ENCODE measurements at regions of chr6 and their contacts with region 1.

Region 1: GRCh38 chr6:52522151-52522626 is 54.7 kb downstream of the TRAM2 start:
- DNase-seq: no peak
- H3K4me3 ChIP-seq: no peak overlapping the region
- H3K27ac ChIP-seq: peak overlapping the region; percentile 32 to 72 (median 62)
- H3K4me1 ChIP-seq: peaks cover 19 to 29% (median 24%) of the 10 kb centered on the region in 4 donors
- H3K27me3 ChIP-seq: no peaks in the 10 kb centered on the region
- CTCF ChIP-seq: no peak
- EP300 ChIP-seq: no peak
- POLR2A ChIP-seq: no peak

Region 2: DNA sequence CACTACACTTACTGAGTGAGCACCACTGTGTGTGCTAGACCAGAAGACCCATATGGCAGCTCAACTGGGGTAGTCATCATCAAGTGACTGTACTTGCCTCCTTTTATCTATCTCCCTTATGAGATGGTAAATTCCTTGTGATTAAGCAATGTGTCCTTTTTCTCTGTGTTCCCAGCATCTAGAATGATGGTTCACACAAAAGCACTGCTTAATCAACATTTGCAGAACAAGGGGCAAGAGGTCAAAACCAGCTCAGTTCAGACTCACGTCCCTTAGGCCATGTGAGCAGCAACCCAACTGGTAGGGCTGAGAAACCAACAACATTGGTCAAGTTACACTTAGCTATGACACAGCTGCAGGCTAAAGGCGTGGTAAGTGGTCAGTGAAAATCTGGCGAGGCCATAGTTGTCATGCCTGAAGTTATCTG is 44.7 kb after region 1 on chr6:
- in situ Hi-C with region 1: no loop called
- intact Hi-C with region 1: loop called (anchors 5 kb)
- DNase-seq: no peak
- H3K4me3 ChIP-seq: no peak overlapping the region
- H3K27ac ChIP-seq: peak overlapping the region in 2 of 4 donors; percentile 36 to 50
- H3K4me1 ChIP-seq: peaks cover 0 to 54% (median 34%) of the 10 kb centered on the region in 4 donors
- H3K27me3 ChIP-seq: no peaks in the 10 kb centered on the region
- CTCF ChIP-seq: no peak
- EP300 ChIP-seq: no peak
- POLR2A ChIP-seq: no peak